ENCODE measurements at regions of chr18 and their contacts with region 1.

Region 1: GRCh38 chr18:45806226-45806625 is 19.2 kb upstream of the SIGLEC15 start:
- DNase-seq: peak; percentile 82 to 93 (median 89)
- H3K4me3 ChIP-seq: peak overlapping the region in 2 of 7 experiments; percentile 19 to 47
- H3K27ac ChIP-seq: peak overlapping the region; percentile 72 to 79
- H3K4me1 ChIP-seq: peaks cover 6 to 31% (median 21%) of the 10 kb centered on the region in 4 experiments
- H3K27me3 ChIP-seq: no peaks in the 10 kb centered on the region

Region 2: DNA sequence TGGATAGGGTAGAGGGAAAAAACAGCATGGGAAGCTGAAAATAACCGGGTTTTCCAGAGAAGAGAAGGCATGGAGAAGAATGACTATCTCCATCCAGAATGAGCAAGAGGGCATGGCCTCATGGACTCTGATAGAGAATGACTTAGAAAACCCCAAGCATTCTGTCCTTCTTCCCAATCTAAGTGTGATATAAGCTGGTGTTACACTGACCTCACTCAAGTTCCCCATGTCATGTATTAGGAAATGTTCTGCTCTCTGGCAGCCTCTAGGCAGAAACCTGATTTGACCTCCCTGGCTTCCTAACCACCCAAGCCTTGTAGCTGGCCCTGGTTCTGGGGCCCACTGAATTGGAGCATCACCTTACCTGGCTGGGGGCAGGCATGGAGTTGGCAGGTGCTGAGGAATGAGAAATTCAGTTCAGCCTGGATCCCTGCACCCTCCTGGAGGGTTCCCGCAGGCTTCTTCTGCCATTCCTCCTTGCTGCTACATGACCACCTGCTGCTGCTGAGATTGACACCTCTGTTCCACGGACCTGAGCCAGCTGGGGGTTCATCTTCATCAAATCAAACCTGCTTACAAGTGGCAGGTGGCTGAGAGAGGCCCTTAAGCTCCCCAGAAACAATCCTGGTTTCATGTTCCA is 14.0 kb after region 1 on chr18:
- CTCF ChIA-PET with region 1: interaction called, 14 read pairs
- POLR2A ChIA-PET with region 1: no interaction called
- DNase-seq: no peak
- H3K4me3 ChIP-seq: no peak overlapping the region
- H3K27ac ChIP-seq: no peak overlapping the region
- H3K4me1 ChIP-seq: peaks cover 0 to 35% (median 23%) of the 10 kb centered on the region in 4 experiments
- H3K27me3 ChIP-seq: no peaks in the 10 kb centered on the region